Heart right ventricle (tissue), 16 donors: ENCODE measurements at regions of chr1 and their contacts with region 1.

Region 1: GRCh38 chr1:233412812-233413211 is 85.3 kb downstream of the MAP3K21 start:
- DNase-seq: no peak
- ATAC-seq: no peak
- H3K4me3 ChIP-seq: no peak overlapping the region
- H3K27ac ChIP-seq: no peak overlapping the region
- H3K4me1 ChIP-seq: no peaks in the 10 kb centered on the region
- H3K27me3 ChIP-seq: peaks cover 0 to 8% (median 0%) of the 10 kb centered on the region in 7 donors
- CTCF ChIP-seq: no peak

Region 2: DNA sequence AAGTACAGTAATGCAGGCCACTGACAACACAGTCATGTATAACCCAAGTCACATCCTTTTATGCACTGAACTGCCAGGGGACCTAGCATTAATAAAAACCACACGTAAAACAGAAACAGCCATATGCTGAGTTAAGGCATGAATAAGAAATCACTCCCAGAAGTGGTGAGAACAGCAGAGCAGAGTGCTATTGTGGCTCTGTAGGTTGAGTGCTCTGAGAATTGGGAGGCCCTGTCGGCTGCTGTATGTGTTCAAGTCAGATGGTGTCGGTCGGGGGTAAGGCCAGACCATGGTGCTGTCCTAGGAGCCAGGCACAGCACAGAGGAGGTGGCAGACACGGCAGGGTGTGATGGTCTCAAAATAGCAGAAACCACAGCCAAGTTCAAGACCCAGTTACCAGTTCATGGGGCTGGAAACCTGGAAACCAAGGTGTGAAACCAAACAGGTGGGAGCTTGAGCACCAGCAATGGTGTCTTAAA is 833.9 kb after region 1 on chr1:
- intact Hi-C with region 1: loop called in 1 of 10 experiments (anchors 10 kb)
- DNase-seq: no peak
- ATAC-seq: no peak
- H3K4me3 ChIP-seq: no peak overlapping the region
- H3K27ac ChIP-seq: no peak overlapping the region
- H3K4me1 ChIP-seq: peaks cover 0 to 11% (median 0%) of the 10 kb centered on the region in 9 donors
- H3K27me3 ChIP-seq: peaks cover 0 to 6% (median 0%) of the 10 kb centered on the region in 7 donors
- CTCF ChIP-seq: no peak